ENCODE measurements at regions of chr10 and their contacts with region 1.

Region 1: GRCh38 chr10:103416436-103417147 is 20.2 kb downstream of the PDCD11 start:
- ATAC-seq: peak; percentile 31 to 67 (median 56)
- H3K4me3 ChIP-seq: no peak overlapping the region
- H3K27ac ChIP-seq: no peak overlapping the region
- H3K4me1 ChIP-seq: no peaks in the 10 kb centered on the region

Region 2: GRCh38 chr10:103102195-103102594 is 314.4 kb before region 1 on chr10:
- in situ Hi-C with region 1: no loop called
- ATAC-seq: no peak
- H3K4me3 ChIP-seq: no peak overlapping the region
- H3K27ac ChIP-seq: no peak overlapping the region
- H3K4me1 ChIP-seq: no peaks in the 10 kb centered on the region

Region 3: GRCh38 chr10:103592186-103593021 is 175.8 kb after region 1 on chr10:
- in situ Hi-C with region 1: loop called in 1 of 9 experiments (anchors 25 kb)
- ATAC-seq: peak; percentile 40 to 80 (median 52)
- H3K4me3 ChIP-seq: no peak overlapping the region
- H3K27ac ChIP-seq: no peak overlapping the region
- H3K4me1 ChIP-seq: no peaks in the 10 kb centered on the region

Measured in motor neuron (in vitro differentiated cells).